ENCODE measurements at regions of chr5 and their contacts with region 1.

Region 1: DNA sequence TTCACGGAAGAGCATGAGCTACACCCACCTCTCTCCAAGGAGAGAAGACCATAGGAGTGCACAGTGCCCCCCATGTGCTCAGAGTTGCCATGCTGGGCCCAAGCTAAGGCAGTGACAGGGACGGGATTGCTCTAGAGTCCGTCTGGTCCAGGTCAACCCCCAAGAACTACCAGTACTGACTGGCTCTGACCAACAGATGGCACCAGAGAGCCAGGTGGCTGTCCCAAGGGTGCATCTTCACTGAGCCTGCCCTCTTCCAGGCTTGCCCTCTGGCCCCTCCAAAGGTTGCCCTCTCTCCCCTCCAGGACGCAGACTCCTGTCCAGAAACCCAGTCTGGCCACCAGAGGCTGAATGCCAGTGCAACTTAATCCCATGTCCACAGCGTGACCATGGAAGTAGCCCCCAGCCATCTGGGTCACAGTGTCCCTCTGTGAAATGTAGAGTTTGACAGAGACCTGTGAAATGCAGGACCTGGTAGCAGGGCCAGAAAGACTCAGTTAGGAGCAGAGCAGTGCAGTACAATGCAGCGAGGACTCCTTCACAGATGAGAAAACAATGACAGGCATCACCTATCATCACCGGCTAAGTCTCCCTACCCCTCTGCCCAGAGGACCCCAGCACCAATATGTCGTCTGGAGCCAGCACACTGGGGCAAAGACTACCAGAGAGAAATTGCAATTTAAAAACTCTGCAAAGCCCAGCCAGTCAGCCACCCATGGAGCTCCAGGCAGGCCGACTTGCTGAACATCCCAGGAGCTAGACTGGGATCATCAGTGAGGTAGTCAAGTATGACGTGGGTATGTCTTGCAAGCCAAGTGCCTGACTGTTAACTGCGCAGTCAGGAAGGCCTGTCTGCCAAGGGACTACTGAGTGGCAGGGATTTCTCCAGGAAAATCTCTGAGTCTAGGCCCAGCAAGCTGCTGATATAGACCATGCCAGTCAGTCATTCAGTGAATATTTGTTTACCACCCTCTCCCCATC is 7.7 kb upstream of the SKP1 start:
- DNase-seq: peak; percentile 86
- H3K4me3 Mint-ChIP-seq: no peak overlapping the region
- H3K27ac Mint-ChIP-seq: no peak overlapping the region
- H3K4me1 Mint-ChIP-seq: no peaks in the 10 kb centered on the region
- H3K27me3 Mint-ChIP-seq: no peaks in the 10 kb centered on the region

Region 2: DNA sequence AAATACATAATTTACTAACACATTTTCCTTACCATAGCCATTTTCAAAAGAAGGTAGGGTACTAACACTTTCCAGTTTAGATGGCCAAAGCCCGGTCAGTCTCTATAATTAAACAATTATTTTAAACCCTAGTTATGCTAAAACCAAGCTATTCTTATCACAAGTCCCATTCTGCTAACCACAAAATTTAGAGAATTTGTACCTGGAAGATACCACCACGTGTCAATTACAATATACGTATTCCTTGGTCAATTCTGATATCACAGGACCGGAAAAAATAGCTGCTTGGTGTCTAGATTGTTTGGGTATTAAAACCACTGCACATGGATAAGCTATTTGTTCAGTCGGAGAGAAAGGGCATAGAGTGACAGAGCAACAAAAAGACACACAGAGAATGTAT is 11.2 kb after region 1 on chr5:
- CTCF ChIA-PET with region 1: interaction called, 13 read pairs
- POLR2A ChIA-PET with region 1: no interaction called
- intact Hi-C with region 1: no loop called
- DNase-seq: no peak
- H3K4me3 Mint-ChIP-seq: no peak overlapping the region
- H3K27ac Mint-ChIP-seq: no peak overlapping the region
- H3K4me1 Mint-ChIP-seq: no peaks in the 10 kb centered on the region
- H3K27me3 Mint-ChIP-seq: no peaks in the 10 kb centered on the region

Region 3: GRCh38 chr5:134281081-134281480 is 96.6 kb after region 1 on chr5:
- CTCF ChIA-PET with region 1: interaction called, 11 read pairs
- POLR2A ChIA-PET with region 1: no interaction called
- intact Hi-C with region 1: no loop called
- DNase-seq: no peak
- H3K4me3 Mint-ChIP-seq: no peak overlapping the region
- H3K27ac Mint-ChIP-seq: no peak overlapping the region
- H3K4me1 Mint-ChIP-seq: peaks cover 6% of the 10 kb centered on the region
- H3K27me3 Mint-ChIP-seq: peaks cover 4% of the 10 kb centered on the region

Region 4: DNA sequence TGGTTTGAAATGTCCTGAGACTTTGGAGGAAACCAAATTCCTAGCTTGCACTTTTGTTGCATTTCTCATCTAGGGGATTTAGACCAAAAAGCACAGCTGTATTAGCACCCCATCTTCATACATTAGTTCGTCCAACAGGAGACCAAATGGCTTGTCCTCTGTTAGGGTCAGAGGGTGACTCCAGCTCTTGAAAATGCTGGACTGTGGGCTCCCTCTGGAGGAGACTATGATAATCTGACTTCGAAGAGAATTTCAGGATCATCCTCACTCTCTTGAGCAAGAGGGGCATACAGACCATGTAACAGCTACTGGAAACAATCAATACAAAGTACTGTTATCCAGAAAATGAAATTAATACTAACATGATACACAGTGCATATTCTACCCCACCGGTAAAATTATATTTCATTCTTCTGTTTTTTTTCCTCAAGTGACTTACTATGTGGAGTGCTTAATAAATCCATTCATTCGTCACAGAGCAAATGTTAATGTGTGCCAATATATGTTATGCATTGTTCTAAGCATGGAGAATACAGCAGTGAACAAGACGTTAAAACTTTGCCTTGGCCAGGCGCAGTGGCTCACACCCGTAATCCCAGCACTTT is 105.2 kb after region 1 on chr5:
- CTCF ChIA-PET with region 1: interaction called, 122 read pairs
- POLR2A ChIA-PET with region 1: no interaction called
- intact Hi-C with region 1: loop called (anchors 1 kb)
- DNase-seq: peak; percentile 42
- H3K4me3 Mint-ChIP-seq: no peak overlapping the region
- H3K27ac Mint-ChIP-seq: no peak overlapping the region
- H3K4me1 Mint-ChIP-seq: peaks cover 2% of the 10 kb centered on the region
- H3K27me3 Mint-ChIP-seq: peaks cover 5% of the 10 kb centered on the region

Region 5: GRCh38 chr5:135526924-135527323 is 1342.5 kb after region 1 on chr5:
- CTCF ChIA-PET with region 1: no interaction called
- POLR2A ChIA-PET with region 1: no interaction called
- intact Hi-C with region 1: no loop called
- DNase-seq: no peak
- H3K4me3 Mint-ChIP-seq: no peak overlapping the region
- H3K27ac Mint-ChIP-seq: no peak overlapping the region
- H3K4me1 Mint-ChIP-seq: no peaks in the 10 kb centered on the region
- H3K27me3 Mint-ChIP-seq: peaks cover 41% of the 10 kb centered on the region